ENCODE measurements at regions of chr20 and their contacts with region 1.

Region 1: DNA sequence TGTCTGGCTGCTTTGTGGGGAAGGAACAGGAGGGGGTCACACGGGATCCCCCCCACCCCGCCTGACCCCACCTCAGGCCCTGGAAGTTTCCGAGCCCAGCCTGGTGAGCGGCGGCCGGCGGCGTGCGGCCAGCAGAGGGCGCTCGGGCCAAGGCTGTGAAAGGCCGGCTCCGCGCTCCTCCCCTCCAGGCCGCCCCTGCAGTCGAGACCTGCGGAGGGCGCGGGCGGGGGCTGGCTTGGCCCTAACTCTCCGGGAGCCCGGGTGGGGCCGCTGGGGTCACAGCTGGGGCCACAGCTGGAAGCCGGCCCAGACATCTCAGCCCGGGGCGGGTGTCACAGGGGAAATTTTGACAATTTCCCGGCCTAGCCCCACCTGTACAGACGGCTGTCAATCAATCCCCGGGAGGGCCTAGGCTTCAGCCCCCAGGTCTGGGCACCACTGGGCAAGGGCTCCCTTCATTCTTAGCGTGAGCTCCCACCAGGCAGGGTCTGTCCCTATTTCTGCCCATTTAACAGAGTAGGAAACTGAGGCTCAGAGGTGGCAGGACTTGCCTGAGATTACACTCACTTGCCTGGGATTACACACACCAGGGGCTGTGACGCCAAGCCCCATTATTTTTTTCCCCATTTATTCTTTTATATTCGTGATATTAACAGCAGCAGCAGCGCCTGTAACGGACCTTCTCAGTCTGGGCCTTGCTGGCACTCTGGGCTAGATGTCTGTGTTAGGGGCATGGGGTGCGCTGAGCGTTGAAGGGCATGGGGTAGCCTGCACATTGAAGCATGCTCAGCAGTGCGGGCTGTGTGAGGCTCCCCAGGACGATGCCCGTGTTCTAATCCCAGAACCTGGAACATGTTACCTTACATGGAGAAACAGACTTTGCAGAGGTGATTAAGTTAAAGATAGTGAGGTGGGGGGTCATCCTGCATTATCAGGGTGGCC is 23.0 kb downstream of the ZBP1 start:
- DNase-seq: peak; percentile 72 to 83
- ATAC-seq: peak; percentile 81 to 90 (median 84)
- H3K4me3 ChIP-seq: no peak overlapping the region
- H3K27ac ChIP-seq: no peak overlapping the region
- H3K4me1 ChIP-seq: no peaks in the 10 kb centered on the region
- H3K27me3 ChIP-seq: peaks cover 0 to 3% (median 0%) of the 10 kb centered on the region in 3 donors
- CTCF ChIP-seq: peak; percentile 94

Region 2: GRCh38 chr20:57374931-57375651 is 222.2 kb before region 1 on chr20:
- intact Hi-C with region 1: loop called in 1 of 2 experiments (anchors 10 kb)
- DNase-seq: peak in 1 of 2 donors; percentile 62
- ATAC-seq: peak in 2 of 4 donors; percentile 52 to 62
- H3K4me3 ChIP-seq: no peak overlapping the region
- H3K27ac ChIP-seq: no peak overlapping the region
- H3K4me1 ChIP-seq: no peaks in the 10 kb centered on the region
- H3K27me3 ChIP-seq: no peaks in the 10 kb centered on the region
- CTCF ChIP-seq: no peak

Region 3: GRCh38 chr20:57383447-57384347 is 213.6 kb before region 1 on chr20:
- intact Hi-C with region 1: loop called (anchors 2 to 10 kb)
- DNase-seq: peak in 1 of 2 donors; percentile 27
- ATAC-seq: no peak
- H3K4me3 ChIP-seq: no peak overlapping the region
- H3K27ac ChIP-seq: no peak overlapping the region
- H3K4me1 ChIP-seq: no peaks in the 10 kb centered on the region
- H3K27me3 ChIP-seq: no peaks in the 10 kb centered on the region
- CTCF ChIP-seq: no peak

Region 4: GRCh38 chr20:57514273-57514751 is 83.0 kb before region 1 on chr20:
- intact Hi-C with region 1: loop called (anchors 1 to 2 kb)
- DNase-seq: peak; percentile 45 to 63
- ATAC-seq: peak; percentile 75 to 88 (median 76)
- H3K4me3 ChIP-seq: no peak overlapping the region
- H3K27ac ChIP-seq: no peak overlapping the region
- H3K4me1 ChIP-seq: no peaks in the 10 kb centered on the region
- H3K27me3 ChIP-seq: peaks cover 0 to under 1% (median 0%) of the 10 kb centered on the region in 3 donors
- CTCF ChIP-seq: peak; percentile 79

Region 5: DNA sequence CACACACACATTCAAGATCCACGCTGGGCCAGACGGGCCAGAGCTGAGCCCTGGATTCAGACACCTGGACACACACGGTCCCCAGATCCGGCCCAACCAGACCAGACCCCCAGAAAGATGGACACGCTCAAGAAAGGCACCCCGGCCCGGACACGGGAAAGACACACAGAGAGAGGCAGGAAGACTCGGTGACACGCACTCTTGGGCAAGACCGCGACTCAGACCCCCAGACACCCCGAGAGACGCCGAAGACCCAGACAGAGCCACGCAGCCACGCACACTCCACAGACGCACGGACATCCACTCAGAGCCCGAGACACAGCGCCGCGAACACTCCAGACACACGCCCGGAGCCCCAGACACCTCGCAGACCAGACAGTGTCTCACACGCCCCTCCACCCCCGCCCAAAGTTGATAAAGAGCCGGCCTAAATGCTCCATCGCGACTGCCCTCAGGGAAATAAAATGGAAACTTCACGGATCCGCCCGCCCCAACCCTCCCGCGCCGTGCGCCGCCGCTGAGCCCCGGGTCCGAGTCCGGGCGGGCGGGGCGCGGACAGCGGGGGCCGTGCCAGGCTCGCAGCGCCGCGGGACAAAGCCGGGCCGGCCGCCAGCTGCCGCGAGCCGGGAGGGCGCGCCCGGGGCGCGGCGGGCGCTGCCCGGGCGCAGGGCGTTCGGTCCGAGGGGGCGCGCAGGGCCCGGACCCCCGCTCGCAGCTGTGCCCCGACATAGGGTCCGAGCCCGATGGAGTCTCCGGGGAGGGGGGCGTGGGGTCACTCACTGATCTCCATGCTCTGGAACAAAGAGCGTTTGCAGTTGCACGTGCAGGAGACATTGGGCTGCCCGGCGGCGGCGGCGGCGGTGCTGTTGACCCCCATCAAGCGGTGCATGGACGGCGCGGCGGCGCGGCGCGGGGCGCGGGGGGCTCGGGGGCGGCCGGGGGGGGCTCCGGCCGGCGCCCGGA is 111.7 kb after region 1 on chr20:
- intact Hi-C with region 1: no loop called
- DNase-seq: peak; percentile 46 to 68
- ATAC-seq: no peak
- H3K4me3 ChIP-seq: peak overlapping the region; percentile 69
- H3K27ac ChIP-seq: peak overlapping the region; percentile 70
- H3K4me1 ChIP-seq: peaks cover 51% of the 10 kb centered on the region
- H3K27me3 ChIP-seq: no peaks in the 10 kb centered on the region
- CTCF ChIP-seq: no peak

Region 6: GRCh38 chr20:58209652-58210397 is 612.6 kb after region 1 on chr20:
- intact Hi-C with region 1: loop called (anchors 1 to 2 kb)
- DNase-seq: peak; percentile 83 to 91
- ATAC-seq: peak; percentile 92 to 96 (median 92)
- H3K4me3 ChIP-seq: no peak overlapping the region
- H3K27ac ChIP-seq: no peak overlapping the region
- H3K4me1 ChIP-seq: no peaks in the 10 kb centered on the region
- H3K27me3 ChIP-seq: peaks cover 0 to 17% (median 4%) of the 10 kb centered on the region in 3 donors
- CTCF ChIP-seq: peak; percentile 100

Measured in psoas muscle (tissue), 8 donors.